ENCODE measurements at regions of chr20 and their contacts with region 1.

Region 1: DNA sequence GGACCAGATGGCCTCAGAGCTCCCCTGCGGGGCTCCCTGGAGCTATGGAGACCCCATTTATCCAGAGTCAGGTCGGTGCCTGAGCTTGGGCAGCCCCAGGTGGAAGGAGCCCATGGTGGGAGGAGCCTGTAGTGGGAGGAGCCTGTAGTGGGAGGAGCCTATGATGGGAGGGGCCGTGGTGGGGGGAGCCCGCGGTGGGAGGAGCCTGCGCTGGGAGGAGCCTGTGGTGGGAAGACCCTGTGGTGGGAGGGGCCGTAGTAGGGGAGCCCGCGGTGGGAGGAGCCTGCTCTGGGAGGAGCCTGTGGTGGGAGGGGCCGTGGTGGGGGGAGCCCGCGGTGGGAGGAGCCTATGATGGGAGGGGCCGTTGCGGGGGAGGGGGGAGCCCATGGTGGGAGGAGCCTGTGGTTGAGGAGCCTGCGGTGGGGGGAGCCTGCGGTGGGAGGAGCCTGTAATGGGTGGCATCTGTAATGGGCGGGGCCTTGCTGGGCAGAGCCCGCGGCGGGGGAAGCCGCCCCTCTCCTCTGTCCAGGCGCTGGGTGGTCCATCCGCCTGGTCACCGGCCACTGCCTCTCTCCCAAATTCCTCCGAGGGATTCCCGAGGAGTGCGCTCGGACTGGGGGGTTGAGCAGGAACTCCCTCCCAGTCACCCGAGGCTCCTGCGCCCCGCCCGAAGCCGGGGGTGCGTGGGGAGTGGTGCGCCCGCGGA is 579 bp upstream of the FNDC11 start:
- DNase-seq: peak; percentile 87 to 93 (median 89)
- H3K4me3 ChIP-seq: peak overlapping the region; percentile 23 to 66
- H3K4me3 Mint-ChIP-seq: peak overlapping the region; percentile 68 to 92 (median 76)
- H3K27ac ChIP-seq: peak overlapping the region; percentile 69
- H3K27ac Mint-ChIP-seq: peak overlapping the region; percentile 93 to 98 (median 97)
- H3K4me1 ChIP-seq: peaks cover 22% of the 10 kb centered on the region
- H3K4me1 Mint-ChIP-seq: peaks cover 5 to 27% (median 14%) of the 10 kb centered on the region in 4 donors
- H3K27me3 ChIP-seq: no peaks in the 10 kb centered on the region
- H3K27me3 Mint-ChIP-seq: peaks cover 0 to 6% of the 10 kb centered on the region in 2 donors

Region 2: GRCh38 chr20:63567386-63568169 is 14.2 kb after region 1 on chr20:
- CTCF ChIA-PET with region 1: no interaction called
- POLR2A ChIA-PET with region 1: interaction called, 12 read pairs
- intact Hi-C with region 1: loop called (anchors 1 kb)
- DNase-seq: peak; percentile 39 to 71 (median 57)
- H3K4me3 ChIP-seq: peak overlapping the region; percentile 42 to 68
- H3K4me3 Mint-ChIP-seq: peak overlapping the region; percentile 78 to 92 (median 84)
- H3K27ac ChIP-seq: peak overlapping the region; percentile 24
- H3K27ac Mint-ChIP-seq: peak overlapping the region in 5 of 7 donors; percentile 57 to 87 (median 60)
- H3K4me1 ChIP-seq: peaks cover 28% of the 10 kb centered on the region
- H3K4me1 Mint-ChIP-seq: peaks cover 6 to 31% (median 18%) of the 10 kb centered on the region in 4 donors
- H3K27me3 ChIP-seq: no peaks in the 10 kb centered on the region
- H3K27me3 Mint-ChIP-seq: no peaks in the 10 kb centered on the region

Region 3: DNA sequence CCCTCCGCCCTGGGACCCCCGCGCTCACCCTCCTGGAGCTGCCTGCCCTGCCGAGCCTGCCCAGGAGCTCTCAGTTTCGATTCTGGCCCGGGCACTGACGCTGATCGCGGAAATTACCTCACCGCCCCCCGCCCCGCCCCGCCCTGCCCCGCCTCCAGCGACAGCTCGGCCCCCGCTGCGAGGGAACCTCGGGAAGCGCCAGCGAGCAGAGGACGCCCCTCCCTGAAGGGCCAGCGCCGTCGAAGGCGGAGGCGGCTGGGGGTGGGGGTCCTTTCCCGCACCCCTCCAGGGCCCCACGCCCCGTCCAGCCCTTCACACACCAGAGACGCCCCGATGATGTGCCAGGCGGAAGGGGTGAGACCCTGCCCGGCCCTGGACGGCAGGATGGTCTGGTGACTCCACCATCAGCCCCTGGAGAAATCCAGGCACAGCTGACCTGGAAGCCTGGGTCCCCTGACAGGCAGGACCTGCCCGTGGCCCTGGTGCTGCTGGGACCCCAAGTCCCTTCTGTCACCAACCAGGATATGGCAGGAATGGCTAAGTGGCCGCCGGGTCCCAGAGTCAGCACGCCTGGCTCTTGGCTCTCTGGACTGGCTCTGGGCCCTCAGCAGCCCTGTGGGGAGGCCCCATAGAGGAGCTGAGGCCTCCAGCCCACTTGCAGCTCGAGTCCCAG is 20.9 kb after region 1 on chr20 and contains the start of gene HELZ2:
- CTCF ChIA-PET with region 1: interaction called, 3 read pairs
- POLR2A ChIA-PET with region 1: interaction called, 11 read pairs
- intact Hi-C with region 1: loop called (anchors 1 kb)
- DNase-seq: peak; percentile 61 to 74 (median 64)
- H3K4me3 ChIP-seq: peak within 1 kb of the TSS; percentile 65 to 84
- H3K4me3 Mint-ChIP-seq: peak within 1 kb of the TSS; percentile 75 to 88 (median 82)
- H3K27ac ChIP-seq: peak within 1 kb of the TSS; percentile 70
- H3K27ac Mint-ChIP-seq: peak within 1 kb of the TSS in 6 of 7 donors; percentile 48 to 83 (median 77)
- H3K4me1 ChIP-seq: peaks cover 24% of the 10 kb centered on the region
- H3K4me1 Mint-ChIP-seq: peaks cover under 1 to 6% (median 4%) of the 10 kb centered on the region in 4 donors
- H3K27me3 ChIP-seq: no peaks in the 10 kb centered on the region
- H3K27me3 Mint-ChIP-seq: no peaks in the 10 kb centered on the region
- total RNA-seq, gene HELZ2: 39.6 to 45.4 TPM

Region 4: GRCh38 chr20:63775096-63775978 is 222.0 kb after region 1 on chr20:
- CTCF ChIA-PET with region 1: no interaction called
- POLR2A ChIA-PET with region 1: no interaction called
- intact Hi-C with region 1: no loop called
- DNase-seq: peak in 1 of 5 donors; percentile 20
- H3K4me3 ChIP-seq: no peak overlapping the region
- H3K4me3 Mint-ChIP-seq: peak overlapping the region in 4 of 8 donors; percentile 6 to 54 (median 36)
- H3K27ac ChIP-seq: no peak overlapping the region
- H3K27ac Mint-ChIP-seq: no peak overlapping the region
- H3K4me1 ChIP-seq: no peaks in the 10 kb centered on the region
- H3K4me1 Mint-ChIP-seq: peaks cover 0 to 4% (median under 1%) of the 10 kb centered on the region in 4 donors
- H3K27me3 ChIP-seq: no peaks in the 10 kb centered on the region
- H3K27me3 Mint-ChIP-seq: peaks cover 0 to 2% of the 10 kb centered on the region in 2 donors

Measured in CD4-positive, alpha-beta memory T cell (primary cell).